ENCODE measurements at regions of chr16 and their contacts with region 1.

Region 1: DNA sequence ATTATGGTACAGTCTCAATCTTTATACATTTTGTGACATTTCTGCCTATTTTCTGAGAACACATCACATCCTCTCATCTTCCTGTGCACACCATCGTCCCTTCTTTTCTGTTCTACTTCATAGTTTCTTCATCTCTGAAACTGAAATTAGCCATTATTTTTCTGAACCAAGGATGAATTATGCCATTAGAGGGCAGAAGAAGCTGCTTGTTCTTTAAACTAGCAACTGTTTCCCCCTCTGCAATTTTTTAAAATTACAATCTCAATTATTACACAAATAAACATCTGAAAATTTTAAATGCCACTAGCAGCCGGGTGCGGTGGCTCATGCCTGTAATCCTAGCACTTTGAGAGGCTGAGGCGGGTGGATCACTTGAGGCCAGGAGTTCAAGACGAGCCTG is 41.3 kb downstream of the RBBP6 start:
- DNase-seq: peak; percentile 18
- H3K4me3 ChIP-seq: no peak overlapping the region
- H3K27ac ChIP-seq: no peak overlapping the region
- H3K4me1 ChIP-seq: no peaks in the 10 kb centered on the region
- H3K27me3 ChIP-seq: no peaks in the 10 kb centered on the region
- CTCF ChIP-seq: peak; percentile 50

Region 2: DNA sequence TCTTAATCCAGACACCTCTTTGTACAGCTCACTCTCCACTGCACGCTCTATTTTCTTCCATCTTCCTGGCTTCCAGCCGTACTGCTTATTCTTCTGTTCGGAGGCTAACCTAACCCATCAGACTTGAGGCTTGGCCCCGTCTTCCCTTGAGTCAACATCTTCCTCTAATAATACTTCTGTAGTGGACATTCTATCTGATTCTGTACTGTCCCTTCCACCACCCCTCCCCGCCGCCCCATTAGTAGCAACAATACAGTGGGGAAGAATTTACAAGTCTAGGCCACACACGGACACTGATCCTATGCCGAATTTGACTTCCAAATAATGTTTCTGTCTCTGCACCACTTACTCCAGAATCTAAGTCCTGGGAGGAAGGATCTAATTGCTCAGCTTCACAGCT is 62.8 kb after region 1 on chr16:
- CTCF ChIA-PET with region 1: no interaction called
- POLR2A ChIA-PET with region 1: no interaction called
- intact Hi-C with region 1: loop called (anchors 2 kb)
- DNase-seq: peak; percentile 44
- H3K4me3 ChIP-seq: no peak overlapping the region
- H3K27ac ChIP-seq: peak overlapping the region; percentile 15
- H3K4me1 ChIP-seq: peaks cover 17% of the 10 kb centered on the region
- H3K27me3 ChIP-seq: no peaks in the 10 kb centered on the region
- CTCF ChIP-seq: no peak

Region 3: GRCh38 chr16:24689145-24689544 is 108.5 kb after region 1 on chr16:
- CTCF ChIA-PET with region 1: no interaction called
- POLR2A ChIA-PET with region 1: no interaction called
- intact Hi-C with region 1: loop called (anchors 5 kb)
- DNase-seq: peak; percentile 73
- H3K4me3 ChIP-seq: no peak overlapping the region
- H3K27ac ChIP-seq: no peak overlapping the region
- H3K4me1 ChIP-seq: no peaks in the 10 kb centered on the region
- H3K27me3 ChIP-seq: no peaks in the 10 kb centered on the region
- CTCF ChIP-seq: peak; percentile 79

Region 4: GRCh38 chr16:24771132-24771778 is 190.6 kb after region 1 on chr16:
- CTCF ChIA-PET with region 1: no interaction called
- POLR2A ChIA-PET with region 1: no interaction called
- intact Hi-C with region 1: no loop called
- DNase-seq: no peak
- H3K4me3 ChIP-seq: no peak overlapping the region
- H3K27ac ChIP-seq: peak overlapping the region; percentile 83
- H3K4me1 ChIP-seq: peaks cover 16% of the 10 kb centered on the region
- H3K27me3 ChIP-seq: no peaks in the 10 kb centered on the region
- CTCF ChIP-seq: no peak

Measured in A673 (cell line).